Breast epithelium (tissue), 4 donors: ENCODE measurements at regions of chr6 and their contacts with region 1.

Region 1: DNA sequence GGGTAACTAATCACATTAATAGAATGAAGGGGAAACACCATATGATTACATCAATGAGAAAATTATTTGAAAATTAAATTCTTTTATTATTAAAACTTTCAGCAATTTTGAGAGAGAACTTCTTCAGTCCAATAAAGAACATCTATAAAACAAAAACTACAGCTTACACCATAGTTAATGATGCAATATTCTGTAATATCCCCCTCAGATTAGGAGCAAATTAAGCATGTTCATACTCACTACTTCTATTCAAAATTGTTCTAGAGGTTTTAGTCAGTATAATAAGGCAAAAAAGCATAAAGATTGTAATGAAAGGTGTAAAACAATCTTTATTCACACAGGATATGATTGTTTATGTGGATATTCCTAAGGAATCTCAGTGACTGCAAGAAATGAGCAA is 465.4 kb downstream of the CD109 start:
- DNase-seq: no peak
- H3K4me3 ChIP-seq: no peak overlapping the region
- H3K27ac ChIP-seq: no peak overlapping the region
- H3K4me1 ChIP-seq: no peaks in the 10 kb centered on the region
- H3K27me3 ChIP-seq: no peaks in the 10 kb centered on the region
- CTCF ChIP-seq: no peak
- POLR2A ChIP-seq: no peak

Region 2: GRCh38 chr6:72873433-72873832 is 1287.9 kb before region 1 on chr6:
- intact Hi-C with region 1: no loop called
- DNase-seq: no peak
- H3K4me3 ChIP-seq: no peak overlapping the region
- H3K27ac ChIP-seq: no peak overlapping the region
- H3K4me1 ChIP-seq: no peaks in the 10 kb centered on the region
- H3K27me3 ChIP-seq: no peaks in the 10 kb centered on the region
- CTCF ChIP-seq: no peak
- POLR2A ChIP-seq: no peak

Region 3: GRCh38 chr6:74091136-74091793 is 70.1 kb before region 1 on chr6:
- intact Hi-C with region 1: no loop called
- DNase-seq: no peak
- H3K4me3 ChIP-seq: no peak overlapping the region
- H3K27ac ChIP-seq: no peak overlapping the region
- H3K4me1 ChIP-seq: no peaks in the 10 kb centered on the region
- H3K27me3 ChIP-seq: no peaks in the 10 kb centered on the region
- CTCF ChIP-seq: peak; percentile 55 to 65 (median 62)
- POLR2A ChIP-seq: no peak

Region 4: DNA sequence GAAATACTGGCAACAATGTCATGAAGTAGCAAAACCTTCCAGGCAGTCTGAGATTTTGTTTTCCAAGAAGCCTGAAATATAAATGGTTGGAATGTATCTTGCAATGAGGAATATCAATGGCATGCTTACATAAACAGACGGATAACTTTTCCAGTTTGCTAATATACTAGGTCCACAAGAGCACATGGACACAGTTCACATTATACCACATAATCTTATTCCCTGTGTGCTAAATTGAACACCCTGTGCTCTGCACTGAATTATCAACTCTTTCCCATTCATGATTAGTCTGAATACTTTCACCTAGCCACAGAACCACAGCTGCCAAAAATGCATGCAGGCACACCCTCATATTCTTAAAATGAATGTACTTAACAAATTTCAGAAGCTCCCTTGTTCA is 770.2 kb after region 1 on chr6:
- intact Hi-C with region 1: loop called (anchors 5 kb)
- DNase-seq: no peak
- H3K4me3 ChIP-seq: no peak overlapping the region
- H3K27ac ChIP-seq: no peak overlapping the region
- H3K4me1 ChIP-seq: no peaks in the 10 kb centered on the region
- H3K27me3 ChIP-seq: no peaks in the 10 kb centered on the region
- CTCF ChIP-seq: no peak
- POLR2A ChIP-seq: no peak